ENCODE measurements at regions of chr4 and their contacts with region 1.

Region 1: DNA sequence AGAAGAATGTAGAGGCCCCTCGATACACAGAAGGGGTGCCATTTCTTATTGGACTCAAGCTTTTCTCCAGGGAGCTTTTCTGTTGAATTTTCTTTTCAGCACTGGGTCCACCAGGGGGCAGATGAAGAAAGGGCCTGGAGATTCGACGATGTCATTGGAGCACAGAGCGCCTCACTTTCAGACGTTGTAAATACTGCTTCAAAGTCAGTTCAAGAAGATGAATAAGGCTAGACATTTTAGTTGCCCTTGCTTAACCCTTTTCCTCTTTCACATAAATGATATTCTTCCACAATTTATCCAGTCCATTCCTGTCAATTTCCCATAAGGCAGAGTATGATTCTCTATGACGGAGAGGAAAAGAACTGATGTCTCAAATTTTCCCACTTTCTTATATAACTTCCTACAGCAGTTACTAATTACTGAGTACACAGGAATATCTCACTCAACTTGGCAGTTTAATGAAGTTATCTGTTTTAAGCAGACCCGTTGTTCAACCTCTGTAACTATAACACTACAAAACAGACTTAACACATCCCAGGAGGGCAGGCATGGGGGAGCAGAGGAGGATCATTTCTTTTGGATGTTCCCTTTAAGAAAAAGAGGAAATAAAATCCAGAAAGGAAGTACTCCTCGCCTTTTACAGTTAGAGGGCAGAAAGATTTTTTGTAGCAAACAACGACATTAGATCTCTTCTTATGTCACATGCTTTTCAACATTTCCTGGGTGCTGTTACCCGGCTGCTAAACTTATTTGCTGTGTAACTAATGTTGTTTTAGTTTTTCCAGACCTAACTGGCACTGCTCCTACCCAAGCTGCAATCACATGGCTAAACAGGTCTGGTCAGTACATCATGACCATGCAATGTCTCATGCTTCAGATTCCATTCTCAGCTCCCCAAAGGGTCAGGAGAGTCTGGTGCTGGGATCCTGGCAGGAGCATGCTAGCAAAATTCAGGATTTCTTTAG is 12.2 kb upstream of the CENPU start:
- DNase-seq: peak; percentile 55 to 85 (median 70)
- ATAC-seq: peak; percentile 97
- H3K4me3 ChIP-seq: no peak overlapping the region
- H3K4me3 Mint-ChIP-seq: peak overlapping the region; percentile 40
- H3K27ac ChIP-seq: no peak overlapping the region
- H3K27ac Mint-ChIP-seq: peak overlapping the region; percentile 87
- H3K4me1 ChIP-seq: peaks cover 12% of the 10 kb centered on the region
- H3K4me1 Mint-ChIP-seq: peaks cover 18% of the 10 kb centered on the region
- H3K27me3 ChIP-seq: no peaks in the 10 kb centered on the region
- H3K27me3 Mint-ChIP-seq: no peaks in the 10 kb centered on the region
- CTCF ChIP-seq: peak; percentile 79

Region 2: GRCh38 chr4:184074989-184075388 is 671.1 kb before region 1 on chr4:
- CTCF ChIA-PET with region 1: no interaction called
- POLR2A ChIA-PET with region 1: no interaction called
- intact Hi-C with region 1: no loop called
- DNase-seq: no peak
- ATAC-seq: no peak
- H3K4me3 ChIP-seq: no peak overlapping the region
- H3K4me3 Mint-ChIP-seq: no peak overlapping the region
- H3K27ac ChIP-seq: no peak overlapping the region
- H3K27ac Mint-ChIP-seq: no peak overlapping the region
- H3K4me1 ChIP-seq: no peaks in the 10 kb centered on the region
- H3K4me1 Mint-ChIP-seq: no peaks in the 10 kb centered on the region
- H3K27me3 ChIP-seq: no peaks in the 10 kb centered on the region
- H3K27me3 Mint-ChIP-seq: peaks cover 39% of the 10 kb centered on the region
- CTCF ChIP-seq: no peak

Region 3: DNA sequence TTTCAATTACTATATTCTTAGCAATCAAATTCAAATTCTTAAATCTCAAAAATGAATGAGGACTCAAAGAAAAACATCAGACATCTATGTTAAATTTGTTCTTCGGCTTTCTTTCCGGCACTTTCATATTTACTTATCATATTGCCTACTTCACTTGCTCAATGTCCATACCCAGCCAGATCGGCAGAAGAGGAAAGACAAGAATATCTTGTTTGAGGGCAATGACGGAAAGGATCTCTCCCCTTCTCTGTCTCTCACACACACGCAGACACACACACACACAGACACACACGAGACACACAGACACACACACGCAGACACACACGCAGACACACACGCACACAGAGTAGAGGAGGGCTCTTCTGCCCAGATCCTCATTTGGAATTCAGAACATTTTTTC is 258.6 kb before region 1 on chr4:
- CTCF ChIA-PET with region 1: no interaction called
- POLR2A ChIA-PET with region 1: no interaction called
- intact Hi-C with region 1: no loop called
- DNase-seq: no peak
- ATAC-seq: no peak
- H3K4me3 ChIP-seq: no peak overlapping the region
- H3K4me3 Mint-ChIP-seq: no peak overlapping the region
- H3K27ac ChIP-seq: no peak overlapping the region
- H3K27ac Mint-ChIP-seq: no peak overlapping the region
- H3K4me1 ChIP-seq: no peaks in the 10 kb centered on the region
- H3K4me1 Mint-ChIP-seq: peaks cover 9% of the 10 kb centered on the region
- H3K27me3 ChIP-seq: no peaks in the 10 kb centered on the region
- H3K27me3 Mint-ChIP-seq: no peaks in the 10 kb centered on the region
- CTCF ChIP-seq: no peak

Region 4: DNA sequence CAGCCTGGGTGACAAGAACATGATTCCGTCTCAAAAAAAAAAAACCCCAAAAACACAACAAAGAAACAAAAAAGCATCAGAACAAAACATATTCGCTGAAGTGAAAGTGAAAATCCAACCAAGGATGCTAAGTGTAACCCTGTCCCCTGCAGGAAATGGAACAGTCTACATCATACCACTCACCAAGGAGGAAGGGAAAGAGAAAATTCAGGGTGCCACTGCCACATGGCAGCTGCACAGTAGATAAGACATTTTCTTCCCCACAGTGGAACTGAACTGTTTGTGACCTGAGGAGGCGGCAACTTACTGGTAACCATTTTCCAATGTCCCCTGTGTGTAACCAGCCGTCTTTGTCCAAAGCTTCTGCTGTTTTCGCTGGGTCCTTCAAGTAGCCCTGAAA is 16.0 kb after region 1 on chr4:
- CTCF ChIA-PET with region 1: interaction called, 3 read pairs
- POLR2A ChIA-PET with region 1: interaction called, 6 read pairs
- intact Hi-C with region 1: loop called in 1 of 2 experiments (anchors 2 kb)
- DNase-seq: peak in 9 of 14 experiments; percentile 5 to 84 (median 22)
- ATAC-seq: peak; percentile 98
- H3K4me3 ChIP-seq: peak overlapping the region; percentile 21
- H3K4me3 Mint-ChIP-seq: peak overlapping the region; percentile 66
- H3K27ac ChIP-seq: peak overlapping the region; percentile 47 to 50
- H3K27ac Mint-ChIP-seq: peak overlapping the region; percentile 78
- H3K4me1 ChIP-seq: peaks cover 17% of the 10 kb centered on the region
- H3K4me1 Mint-ChIP-seq: peaks cover 33% of the 10 kb centered on the region
- H3K27me3 ChIP-seq: no peaks in the 10 kb centered on the region
- H3K27me3 Mint-ChIP-seq: no peaks in the 10 kb centered on the region
- CTCF ChIP-seq: no peak

Region 5: GRCh38 chr4:184907216-184907615 is 161.1 kb after region 1 on chr4:
- CTCF ChIA-PET with region 1: no interaction called
- POLR2A ChIA-PET with region 1: no interaction called
- intact Hi-C with region 1: loop called (anchors 2 kb)
- DNase-seq: peak in 3 of 14 experiments; percentile 13 to 24 (median 23)
- ATAC-seq: peak; percentile 51
- H3K4me3 ChIP-seq: no peak overlapping the region
- H3K4me3 Mint-ChIP-seq: no peak overlapping the region
- H3K27ac ChIP-seq: no peak overlapping the region
- H3K27ac Mint-ChIP-seq: no peak overlapping the region
- H3K4me1 ChIP-seq: no peaks in the 10 kb centered on the region
- H3K4me1 Mint-ChIP-seq: peaks cover 7% of the 10 kb centered on the region
- H3K27me3 ChIP-seq: peaks cover 0 to 2% of the 10 kb centered on the region in 2 experiments
- H3K27me3 Mint-ChIP-seq: no peaks in the 10 kb centered on the region
- CTCF ChIP-seq: no peak

Region 6: DNA sequence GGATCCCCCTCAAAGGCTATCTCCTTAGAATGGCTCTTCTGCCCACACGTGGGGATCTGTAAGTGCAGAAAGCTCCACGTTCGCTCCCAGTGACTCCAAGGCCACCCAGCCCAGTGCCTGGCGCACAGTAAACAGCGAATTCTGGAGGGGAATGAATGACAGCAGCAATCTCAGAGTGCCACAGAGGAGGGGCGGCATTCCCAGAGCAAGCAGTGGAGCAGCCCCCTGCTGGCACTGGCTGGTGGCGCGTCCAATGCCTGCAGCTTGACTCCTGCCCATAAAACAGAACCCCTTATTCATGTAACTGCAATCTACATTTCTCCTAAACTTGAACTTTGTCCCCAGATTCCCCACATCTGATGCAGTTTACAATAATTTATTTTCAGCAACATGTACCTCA is 265.3 kb after region 1 on chr4:
- CTCF ChIA-PET with region 1: no interaction called
- POLR2A ChIA-PET with region 1: no interaction called
- intact Hi-C with region 1: loop called in 1 of 2 experiments (anchors 5 kb)
- DNase-seq: peak in 8 of 14 experiments; percentile 7 to 38 (median 13)
- ATAC-seq: no peak
- H3K4me3 ChIP-seq: no peak overlapping the region
- H3K4me3 Mint-ChIP-seq: no peak overlapping the region
- H3K27ac ChIP-seq: no peak overlapping the region
- H3K27ac Mint-ChIP-seq: no peak overlapping the region
- H3K4me1 ChIP-seq: peaks cover 4% of the 10 kb centered on the region
- H3K4me1 Mint-ChIP-seq: no peaks in the 10 kb centered on the region
- H3K27me3 ChIP-seq: peaks cover 39 to 51% of the 10 kb centered on the region in 2 experiments
- H3K27me3 Mint-ChIP-seq: peaks cover 91% of the 10 kb centered on the region
- CTCF ChIP-seq: peak; percentile 57

Region 7: GRCh38 chr4:185134307-185134869 is 388.3 kb after region 1 on chr4:
- CTCF ChIA-PET with region 1: interaction called, 3 read pairs
- POLR2A ChIA-PET with region 1: no interaction called
- intact Hi-C with region 1: loop called (anchors 1 to 2 kb)
- DNase-seq: peak in 3 of 14 experiments; percentile 55 to 71 (median 66)
- ATAC-seq: peak; percentile 66
- H3K4me3 ChIP-seq: no peak overlapping the region
- H3K4me3 Mint-ChIP-seq: no peak overlapping the region
- H3K27ac ChIP-seq: no peak overlapping the region
- H3K27ac Mint-ChIP-seq: no peak overlapping the region
- H3K4me1 ChIP-seq: no peaks in the 10 kb centered on the region
- H3K4me1 Mint-ChIP-seq: no peaks in the 10 kb centered on the region
- H3K27me3 ChIP-seq: peaks cover 6 to 7% of the 10 kb centered on the region in 2 experiments
- H3K27me3 Mint-ChIP-seq: peaks cover 62% of the 10 kb centered on the region
- CTCF ChIP-seq: peak; percentile 87

Region 8: GRCh38 chr4:185369731-185370130 is 623.6 kb after region 1 on chr4:
- CTCF ChIA-PET with region 1: no interaction called
- POLR2A ChIA-PET with region 1: no interaction called
- intact Hi-C with region 1: no loop called
- DNase-seq: no peak
- ATAC-seq: no peak
- H3K4me3 ChIP-seq: no peak overlapping the region
- H3K4me3 Mint-ChIP-seq: no peak overlapping the region
- H3K27ac ChIP-seq: no peak overlapping the region
- H3K27ac Mint-ChIP-seq: no peak overlapping the region
- H3K4me1 ChIP-seq: no peaks in the 10 kb centered on the region
- H3K4me1 Mint-ChIP-seq: no peaks in the 10 kb centered on the region
- H3K27me3 ChIP-seq: no peaks in the 10 kb centered on the region
- H3K27me3 Mint-ChIP-seq: no peaks in the 10 kb centered on the region
- CTCF ChIP-seq: no peak